IMR-90 (cell line): ENCODE measurements at regions of chr12 and their contacts with region 1.

Region 1: GRCh38 chr12:116916714-116917114 is 6.0 kb downstream of the FBXW8 start:
- DNase-seq: peak; percentile 84
- ATAC-seq: peak; percentile 89
- H3K4me3 ChIP-seq: no peak overlapping the region
- H3K27ac ChIP-seq: no peak overlapping the region
- H3K4me1 ChIP-seq: peaks cover 7% of the 10 kb centered on the region
- H3K27me3 ChIP-seq: no peaks in the 10 kb centered on the region
- CTCF ChIP-seq: peak; percentile 39
- POLR2A ChIP-seq: no peak
- RAD21 ChIP-seq: peak; percentile 39; the same call in 1 of the 2 replicates

Region 2: GRCh38 chr12:116982791-116983411 is 66.2 kb after region 1 on chr12:
- CTCF ChIA-PET with region 1: interaction called, 3 read pairs
- POLR2A ChIA-PET with region 1: no interaction called
- dilution Hi-C with region 1: no loop called
- in situ Hi-C with region 1: no loop called
- intact Hi-C with region 1: loop called (anchors 5 kb)
- DNase-seq: peak; percentile 95
- ATAC-seq: peak; percentile 84
- H3K4me3 ChIP-seq: peak overlapping the region; percentile 34; the same call in 1 of the 2 replicates
- H3K27ac ChIP-seq: peak overlapping the region; percentile 15; the same call in 1 of the 2 replicates
- H3K4me1 ChIP-seq: peaks cover 6% of the 10 kb centered on the region
- H3K27me3 ChIP-seq: no peaks in the 10 kb centered on the region
- CTCF ChIP-seq: no peak
- POLR2A ChIP-seq: no peak
- RAD21 ChIP-seq: no peak

Region 3: GRCh38 chr12:117718559-117718958 is 801.8 kb after region 1 on chr12:
- CTCF ChIA-PET with region 1: no interaction called
- POLR2A ChIA-PET with region 1: no interaction called
- dilution Hi-C with region 1: no loop called
- in situ Hi-C with region 1: no loop called
- intact Hi-C with region 1: no loop called
- DNase-seq: no peak
- ATAC-seq: no peak
- H3K4me3 ChIP-seq: no peak overlapping the region
- H3K27ac ChIP-seq: no peak overlapping the region
- H3K4me1 ChIP-seq: no peaks in the 10 kb centered on the region
- H3K27me3 ChIP-seq: no peaks in the 10 kb centered on the region
- CTCF ChIP-seq: no peak
- POLR2A ChIP-seq: no peak
- RAD21 ChIP-seq: no peak